Kidney (tissue), 22 donors: ENCODE measurements at regions of chr6 and their contacts with region 1.

Region 1: GRCh38 chr6:73129653-73130443 is 95.4 kb downstream of the KHDC1L start:
- DNase-seq: peak; percentile 81 to 88 (median 86)
- H3K4me3 ChIP-seq: no peak overlapping the region
- H3K27ac ChIP-seq: no peak overlapping the region
- H3K4me1 ChIP-seq: no peaks in the 10 kb centered on the region
- H3K27me3 ChIP-seq: no peaks in the 10 kb centered on the region
- CTCF ChIP-seq: peak; percentile 95

Region 2: GRCh38 chr6:72619883-72620696 is 509.8 kb before region 1 on chr6:
- intact Hi-C with region 1: loop called (anchors 5 kb)
- DNase-seq: peak; percentile 52 to 76 (median 68)
- H3K4me3 ChIP-seq: peak overlapping the region in 2 of 3 donors; percentile 22 to 42
- H3K27ac ChIP-seq: no peak overlapping the region
- H3K4me1 ChIP-seq: peaks cover 0 to 10% (median 0%) of the 10 kb centered on the region in 3 donors
- H3K27me3 ChIP-seq: peaks cover 10% of the 10 kb centered on the region
- CTCF ChIP-seq: no peak

Region 3: GRCh38 chr6:73180763-73181619 is 51.1 kb after region 1 on chr6:
- intact Hi-C with region 1: no loop called
- DNase-seq: peak in 4 of 5 donors; percentile 43 to 70 (median 56)
- H3K4me3 ChIP-seq: peak overlapping the region in 2 of 3 donors; percentile 50 to 62
- H3K27ac ChIP-seq: no peak overlapping the region
- H3K4me1 ChIP-seq: peaks cover 0 to 2% (median 0%) of the 10 kb centered on the region in 3 donors
- H3K27me3 ChIP-seq: no peaks in the 10 kb centered on the region
- CTCF ChIP-seq: peak; percentile 68

Region 4: GRCh38 chr6:73679009-73679408 is 549.2 kb after region 1 on chr6:
- intact Hi-C with region 1: no loop called
- DNase-seq: no peak
- H3K4me3 ChIP-seq: no peak overlapping the region
- H3K27ac ChIP-seq: no peak overlapping the region
- H3K4me1 ChIP-seq: no peaks in the 10 kb centered on the region
- H3K27me3 ChIP-seq: no peaks in the 10 kb centered on the region
- CTCF ChIP-seq: no peak